ENCODE measurements at regions of chr18 and their contacts with region 1.

Region 1: DNA sequence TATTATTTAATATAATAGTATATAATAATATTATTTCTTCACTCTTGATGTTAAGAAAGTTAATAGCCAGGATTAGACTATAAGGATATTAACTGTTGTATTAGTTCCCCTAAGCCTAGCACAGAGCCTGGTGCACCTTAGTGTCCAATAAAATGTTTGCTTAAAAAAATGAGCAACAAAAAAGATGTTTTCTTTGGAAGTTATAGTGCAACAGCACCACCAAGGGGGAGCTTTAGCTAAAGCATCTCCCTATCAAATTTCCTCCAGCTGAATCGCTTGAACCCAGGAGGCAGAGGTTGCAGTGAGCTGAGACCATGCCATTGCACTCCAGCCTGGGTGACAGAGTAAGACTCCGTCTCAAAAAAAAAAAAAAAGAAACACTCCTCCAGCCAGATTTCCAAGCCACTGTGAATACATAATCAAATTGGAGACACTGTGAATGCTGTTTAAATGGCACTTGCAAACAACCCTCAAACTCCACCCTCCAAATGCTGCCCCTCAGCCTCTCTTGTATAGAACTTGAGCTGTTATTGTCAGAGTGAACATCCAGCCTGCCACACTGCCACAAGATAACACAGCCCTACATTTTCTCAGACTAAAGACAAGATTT is 221.9 kb downstream of the DYM start:
- DNase-seq: no peak
- ATAC-seq: peak in 1 of 4 donors; percentile 51
- H3K4me3 ChIP-seq: no peak overlapping the region
- H3K27ac ChIP-seq: no peak overlapping the region
- H3K4me1 ChIP-seq: no peaks in the 10 kb centered on the region
- H3K27me3 ChIP-seq: no peaks in the 10 kb centered on the region
- CTCF ChIP-seq: no peak

Region 2: GRCh38 chr18:48675352-48675761 is 563.2 kb before region 1 on chr18:
- intact Hi-C with region 1: loop called in 1 of 3 experiments (anchors 10 kb)
- DNase-seq: peak; percentile 71 to 94 (median 88)
- ATAC-seq: peak; percentile 97 to 99 (median 98)
- H3K4me3 ChIP-seq: no peak overlapping the region
- H3K27ac ChIP-seq: no peak overlapping the region
- H3K4me1 ChIP-seq: no peaks in the 10 kb centered on the region
- H3K27me3 ChIP-seq: no peaks in the 10 kb centered on the region
- CTCF ChIP-seq: peak; percentile 87 to 92 (median 90)

Region 3: DNA sequence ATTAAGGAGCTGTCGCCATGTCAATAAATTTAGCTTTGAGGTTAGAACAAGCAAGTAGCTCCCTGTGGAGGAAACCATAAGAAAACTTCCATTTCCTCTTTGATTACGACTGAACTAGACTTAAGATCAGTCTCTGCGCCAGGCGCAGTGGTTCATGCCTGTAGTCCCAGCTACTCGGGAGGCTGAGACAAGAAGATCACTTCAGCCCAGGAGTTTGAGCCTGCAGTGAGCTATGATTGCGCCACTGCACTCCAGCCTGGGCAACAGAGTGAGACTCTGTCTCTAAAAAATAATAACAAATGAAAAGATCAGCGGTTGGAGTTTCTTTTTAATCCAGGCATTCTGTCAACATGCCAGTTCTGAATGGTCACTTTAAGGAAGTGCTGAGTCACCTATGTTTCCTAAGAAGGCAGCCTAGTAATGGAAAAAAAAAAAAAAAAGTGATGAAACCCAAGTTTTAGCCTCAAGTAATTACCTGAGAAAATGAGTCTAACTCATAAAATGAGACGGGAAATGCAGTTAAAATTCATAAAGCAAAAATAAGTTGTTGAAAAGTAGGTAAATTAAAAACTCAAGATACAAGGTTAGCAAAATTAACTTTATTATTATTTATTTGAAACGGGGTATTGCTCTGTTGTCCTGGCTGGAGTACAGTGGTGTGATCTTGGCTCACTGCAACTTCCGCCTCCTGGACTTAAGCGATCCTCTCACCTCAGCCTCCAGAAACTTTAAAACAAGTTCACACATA is 238.3 kb after region 1 on chr18:
- intact Hi-C with region 1: no loop called
- DNase-seq: no peak
- ATAC-seq: peak in 3 of 4 donors; percentile 29 to 47 (median 44)
- H3K4me3 ChIP-seq: no peak overlapping the region
- H3K27ac ChIP-seq: peak overlapping the region in 3 of 4 donors; percentile 7 to 44 (median 17)
- H3K4me1 ChIP-seq: no peaks in the 10 kb centered on the region
- H3K27me3 ChIP-seq: no peaks in the 10 kb centered on the region
- CTCF ChIP-seq: no peak

Region 4: GRCh38 chr18:49537232-49537896 is 298.8 kb after region 1 on chr18:
- intact Hi-C with region 1: no loop called
- DNase-seq: no peak
- ATAC-seq: no peak
- H3K4me3 ChIP-seq: no peak overlapping the region
- H3K27ac ChIP-seq: no peak overlapping the region
- H3K4me1 ChIP-seq: no peaks in the 10 kb centered on the region
- H3K27me3 ChIP-seq: no peaks in the 10 kb centered on the region
- CTCF ChIP-seq: no peak

Measured in pancreas (tissue), 10 donors.